ENCODE measurements at regions of chr10 and their contacts with region 1.

Region 1: GRCh38 chr10:61992671-61993668 is 91.5 kb downstream of the ARID5B start:
- DNase-seq: peak; percentile 74
- ATAC-seq: peak; percentile 50
- H3K4me3 Mint-ChIP-seq: peak overlapping the region; percentile 64
- H3K27ac Mint-ChIP-seq: peak overlapping the region; percentile 95
- H3K4me1 Mint-ChIP-seq: peaks cover 87% of the 10 kb centered on the region
- H3K27me3 Mint-ChIP-seq: no peaks in the 10 kb centered on the region

Region 2: DNA sequence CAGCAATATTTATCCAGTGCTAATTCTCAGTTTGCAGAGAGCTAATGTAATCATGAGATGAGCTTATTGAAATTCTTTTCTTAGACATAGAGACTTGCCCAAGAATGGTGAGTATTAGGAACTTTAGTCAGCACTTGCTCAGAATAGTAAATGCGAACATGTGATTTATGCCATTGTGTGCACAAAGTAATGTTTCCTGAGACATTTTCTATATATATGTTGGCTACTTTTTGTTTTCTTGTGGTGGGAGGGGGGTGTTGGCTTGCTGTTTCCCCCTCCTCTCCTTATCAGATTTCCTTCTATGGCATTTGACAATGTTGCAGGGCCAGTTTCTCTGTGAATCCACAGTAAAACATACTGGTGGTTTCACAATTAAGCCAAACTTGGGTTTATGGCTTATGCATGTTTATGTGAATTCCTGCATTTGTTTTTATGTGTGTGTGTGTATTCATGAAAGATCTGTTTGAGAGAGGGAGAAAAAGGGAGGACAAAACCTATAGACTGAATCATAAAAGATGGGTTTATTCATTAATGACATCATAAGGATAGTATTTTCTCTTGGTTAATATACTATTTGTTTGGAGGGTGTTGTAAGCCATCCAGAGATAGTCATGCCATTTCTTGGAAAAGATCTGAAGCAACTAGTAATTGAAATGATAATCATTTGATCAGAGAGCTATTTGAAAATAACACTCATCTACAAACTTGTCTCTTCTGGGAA is 55.2 kb before region 1 on chr10:
- CTCF ChIA-PET with region 1: interaction called, 9 read pairs
- POLR2A ChIA-PET with region 1: interaction called, 18 read pairs
- intact Hi-C with region 1: no loop called
- DNase-seq: no peak
- ATAC-seq: peak; percentile 62
- H3K4me3 Mint-ChIP-seq: peak overlapping the region; percentile 41
- H3K27ac Mint-ChIP-seq: peak overlapping the region; percentile 92
- H3K4me1 Mint-ChIP-seq: peaks cover 94% of the 10 kb centered on the region
- H3K27me3 Mint-ChIP-seq: no peaks in the 10 kb centered on the region

Region 3: DNA sequence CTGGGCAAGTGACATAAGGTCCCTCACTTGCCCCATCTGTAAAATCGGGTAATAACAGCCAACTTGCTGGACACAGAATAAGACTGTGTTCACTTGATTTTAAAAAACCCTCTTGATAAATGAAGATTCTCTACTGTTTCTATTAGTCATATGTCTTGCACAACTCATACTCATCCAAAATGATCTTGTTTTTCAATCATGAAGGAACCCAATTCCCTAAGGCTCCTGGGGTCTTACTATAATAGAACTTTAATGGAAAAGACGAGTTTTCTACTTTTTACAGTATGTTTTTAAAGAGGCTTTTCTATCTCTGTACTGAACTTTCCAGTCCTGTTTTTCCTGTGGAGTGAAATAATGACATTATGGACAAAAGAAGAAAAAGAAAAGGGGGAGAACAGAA is 12.3 kb after region 1 on chr10:
- CTCF ChIA-PET with region 1: interaction called, 5 read pairs
- POLR2A ChIA-PET with region 1: interaction called, 10 read pairs
- intact Hi-C with region 1: loop called in 1 of 2 experiments (anchors 1 kb)
- DNase-seq: no peak
- ATAC-seq: no peak
- H3K4me3 Mint-ChIP-seq: no peak overlapping the region
- H3K27ac Mint-ChIP-seq: peak overlapping the region; percentile 52
- H3K4me1 Mint-ChIP-seq: peaks cover 86% of the 10 kb centered on the region
- H3K27me3 Mint-ChIP-seq: no peaks in the 10 kb centered on the region

Region 4: DNA sequence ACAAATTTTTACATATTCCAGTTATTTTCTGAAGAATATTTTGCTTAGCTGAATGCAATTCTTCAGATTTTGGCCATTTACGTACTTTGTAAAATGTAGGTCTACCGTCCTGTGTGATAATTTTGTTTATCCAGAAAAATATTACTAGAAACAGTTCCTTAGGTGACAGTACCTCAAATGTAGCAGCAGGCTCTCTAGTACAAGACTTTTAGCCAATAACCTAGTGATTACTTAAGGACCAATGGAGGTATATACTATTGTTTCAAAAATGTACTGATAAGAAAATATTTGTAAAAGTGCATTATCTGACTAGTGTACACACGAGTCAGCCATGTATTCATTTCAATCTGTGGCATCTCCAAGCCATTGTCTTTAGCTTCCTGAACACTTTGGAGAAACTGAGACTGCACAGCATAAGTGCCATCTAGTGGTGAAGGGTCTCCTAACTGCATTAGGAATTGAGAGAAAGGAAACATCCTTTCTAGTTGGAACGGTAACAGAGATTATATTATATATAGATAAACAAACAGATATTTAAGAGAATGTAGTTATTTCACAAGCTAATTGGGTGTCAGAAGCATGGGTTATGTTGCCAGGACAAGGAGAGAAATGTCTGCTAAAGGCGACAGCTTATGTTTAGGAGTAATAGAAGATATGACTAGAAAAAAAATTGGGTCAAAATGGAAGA is 252.0 kb after region 1 on chr10:
- CTCF ChIA-PET with region 1: interaction called, 3 read pairs
- POLR2A ChIA-PET with region 1: no interaction called
- intact Hi-C with region 1: loop called in 1 of 2 experiments (anchors 2 kb)
- DNase-seq: peak; percentile 65
- ATAC-seq: peak; percentile 84
- H3K4me3 Mint-ChIP-seq: peak overlapping the region; percentile 36
- H3K27ac Mint-ChIP-seq: peak overlapping the region; percentile 87
- H3K4me1 Mint-ChIP-seq: peaks cover 35% of the 10 kb centered on the region
- H3K27me3 Mint-ChIP-seq: no peaks in the 10 kb centered on the region

Measured in activated CD4-positive, alpha-beta T cell treated with anti-CD3 and anti-CD28 coated beads for 36 hours (primary cell).